ENCODE measurements at regions of chr3 and their contacts with region 1.

Region 1: GRCh38 chr3:121545574-121546455 is at the start of gene POLQ:
- DNase-seq: peak; percentile 92
- H3K4me3 Mint-ChIP-seq: peak within 1 kb of the TSS; percentile 99
- H3K27ac Mint-ChIP-seq: peak within 1 kb of the TSS; percentile 96
- H3K4me1 Mint-ChIP-seq: peaks cover 39% of the 10 kb centered on the region
- H3K27me3 Mint-ChIP-seq: no peaks in the 10 kb centered on the region

Region 2: DNA sequence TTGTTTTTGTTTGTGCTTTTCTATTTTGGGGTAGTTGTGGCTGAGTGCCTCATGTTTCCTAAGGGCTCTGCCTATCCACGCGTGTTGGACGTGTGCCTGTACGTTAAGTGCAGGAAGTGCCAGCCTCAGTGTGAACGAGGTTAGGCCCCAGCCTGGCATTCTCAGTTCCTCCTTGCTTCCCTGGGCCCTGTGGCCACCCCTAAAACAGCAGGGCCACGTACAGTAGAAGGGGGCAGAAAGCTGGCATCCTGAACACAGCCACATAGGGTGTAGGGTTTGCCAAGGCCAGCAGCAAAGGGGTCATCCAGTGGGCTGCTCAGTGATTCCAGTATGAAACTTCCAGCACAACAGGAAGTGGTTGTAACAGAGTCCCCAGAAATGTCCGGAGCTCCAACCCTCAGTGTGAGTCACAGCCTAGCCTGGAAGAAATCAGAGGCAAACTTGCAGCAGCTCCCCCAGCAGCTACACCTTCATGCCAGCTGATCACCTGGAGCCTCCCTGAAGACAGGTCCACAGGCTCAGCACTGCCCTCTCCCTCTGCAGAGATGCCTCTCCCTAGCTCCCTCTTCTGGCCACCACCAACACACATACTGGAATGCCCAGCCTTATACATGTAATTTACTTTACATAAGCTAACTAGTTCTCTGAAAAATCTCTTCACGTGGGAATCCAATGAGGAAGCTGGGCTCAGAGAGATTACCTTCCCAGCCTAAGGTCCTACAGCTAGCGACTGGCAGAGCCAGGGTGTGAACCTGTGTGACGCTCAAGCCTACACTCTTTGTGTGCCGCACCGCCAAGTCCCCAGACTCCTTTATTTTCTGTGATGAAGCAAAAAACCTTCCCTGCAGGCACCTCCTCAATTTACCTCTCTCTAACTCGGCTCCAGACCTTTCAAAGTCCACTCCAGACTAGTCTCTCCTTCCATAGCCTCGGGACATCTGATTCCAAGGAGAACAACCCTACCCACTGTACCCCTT is 449.6 kb after region 1 on chr3:
- CTCF ChIA-PET with region 1: interaction called, 11 read pairs
- DNase-seq: peak; percentile 49
- H3K4me3 Mint-ChIP-seq: no peak overlapping the region
- H3K27ac Mint-ChIP-seq: peak overlapping the region; percentile 30
- H3K4me1 Mint-ChIP-seq: peaks cover 18% of the 10 kb centered on the region
- H3K27me3 Mint-ChIP-seq: peaks cover 8% of the 10 kb centered on the region

Region 3: DNA sequence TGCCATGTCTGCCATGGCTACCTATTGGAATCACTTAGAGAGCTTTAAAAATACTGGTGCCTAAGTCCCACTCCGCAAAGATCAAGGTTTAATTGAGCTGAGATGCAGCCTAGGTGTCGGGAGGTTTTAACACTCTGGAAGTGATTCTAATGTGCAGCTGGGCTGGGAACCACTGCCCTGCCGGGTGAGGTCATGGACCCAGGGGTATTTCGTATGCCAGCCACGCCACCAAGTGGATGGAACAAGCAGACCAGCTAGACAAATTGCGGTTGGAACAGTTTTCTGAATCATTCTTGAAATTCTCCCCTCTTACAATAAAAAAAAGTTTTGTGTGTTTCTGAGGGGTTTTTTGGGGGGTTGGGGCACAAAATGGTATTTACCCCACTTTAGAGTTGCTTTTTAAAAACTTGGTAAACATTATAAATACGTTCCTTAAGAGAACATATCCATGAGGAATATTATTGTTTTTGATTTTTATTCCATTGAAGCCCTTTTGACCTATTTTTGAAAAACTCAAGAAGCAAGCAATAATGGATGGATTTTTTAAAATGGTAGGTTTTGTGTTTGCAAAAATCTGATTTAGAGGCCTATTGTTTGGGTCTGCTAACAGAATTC is 713.0 kb after region 1 on chr3:
- CTCF ChIA-PET with region 1: interaction called, 15 read pairs
- DNase-seq: peak; percentile 61
- H3K4me3 Mint-ChIP-seq: no peak overlapping the region
- H3K27ac Mint-ChIP-seq: no peak overlapping the region
- H3K4me1 Mint-ChIP-seq: peaks cover 7% of the 10 kb centered on the region
- H3K27me3 Mint-ChIP-seq: peaks cover 24% of the 10 kb centered on the region